Common myeloid progenitor, CD34-positive (primary cell): ENCODE measurements at regions of chr5 and their contacts with region 1.

Region 1: DNA sequence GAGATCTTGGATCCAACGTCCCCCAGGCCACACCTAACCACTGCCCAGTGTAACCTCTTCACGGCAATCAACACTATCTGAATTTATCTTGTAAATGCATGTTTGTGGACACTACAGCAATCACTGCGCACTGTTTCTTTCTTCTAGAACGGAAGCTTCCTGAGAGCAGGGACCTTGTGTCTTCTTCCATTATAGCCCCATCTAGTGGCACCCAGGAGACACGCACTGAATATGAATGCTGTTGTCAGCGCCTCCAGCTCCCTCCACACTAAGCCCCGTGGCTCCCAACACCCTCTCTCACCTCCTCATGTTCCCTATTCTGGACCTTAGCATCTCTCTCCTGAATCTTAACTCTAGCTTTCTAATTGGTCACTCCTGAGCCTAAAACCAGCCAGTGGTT is 72.7 kb downstream of the SMIM23 start:
- DNase-seq: no peak
- H3K4me3 ChIP-seq: no peak overlapping the region
- H3K27ac ChIP-seq: no peak overlapping the region
- H3K4me1 ChIP-seq: peaks cover 3 to 24% (median 15%) of the 10 kb centered on the region in 4 experiments
- H3K27me3 ChIP-seq: no peaks in the 10 kb centered on the region

Region 2: GRCh38 chr5:171871711-171872110 is 13.4 kb after region 1 on chr5:
- CTCF ChIA-PET with region 1: interaction called, 15 read pairs
- POLR2A ChIA-PET with region 1: no interaction called
- DNase-seq: peak in 1 of 3 donors; percentile 33
- H3K4me3 ChIP-seq: no peak overlapping the region
- H3K27ac ChIP-seq: no peak overlapping the region
- H3K4me1 ChIP-seq: peaks cover 7 to 46% (median 17%) of the 10 kb centered on the region in 4 experiments
- H3K27me3 ChIP-seq: no peaks in the 10 kb centered on the region

Region 3: GRCh38 chr5:171953860-171954701 is 95.8 kb after region 1 on chr5:
- CTCF ChIA-PET with region 1: no interaction called
- POLR2A ChIA-PET with region 1: no interaction called
- DNase-seq: no peak
- H3K4me3 ChIP-seq: no peak overlapping the region
- H3K27ac ChIP-seq: no peak overlapping the region
- H3K4me1 ChIP-seq: peaks cover 13 to 26% (median 22%) of the 10 kb centered on the region in 4 experiments
- H3K27me3 ChIP-seq: no peaks in the 10 kb centered on the region